Esophagus squamous epithelium (tissue), 5 donors: ENCODE measurements at regions of chr3 and their contacts with region 1.

Region 1: DNA sequence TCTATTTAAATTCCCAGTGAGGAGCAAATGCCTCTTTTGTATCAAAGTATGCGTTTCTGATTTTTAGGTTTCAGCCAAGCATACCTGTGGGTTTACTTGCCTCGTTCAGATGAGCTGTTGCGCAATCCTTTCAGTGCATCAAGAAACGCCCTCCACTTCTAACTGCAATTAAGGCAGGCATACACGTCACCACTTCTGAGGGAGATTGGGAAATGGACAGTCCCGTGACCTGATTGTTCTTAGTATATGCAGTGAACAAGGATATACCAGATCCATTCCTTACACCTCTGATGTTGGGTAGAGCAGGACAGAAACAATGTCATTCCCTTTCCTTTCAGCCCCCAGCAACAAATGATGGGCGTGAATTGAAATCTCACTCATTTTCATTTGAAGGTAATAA is 219.0 kb downstream of the ITPR1 start:
- DNase-seq: no peak
- H3K4me3 ChIP-seq: no peak overlapping the region
- H3K27ac ChIP-seq: peak overlapping the region; percentile 39 to 78 (median 70)
- H3K4me1 ChIP-seq: peaks cover 0 to 17% (median 3%) of the 10 kb centered on the region in 3 donors
- H3K27me3 ChIP-seq: no peaks in the 10 kb centered on the region
- CTCF ChIP-seq: no peak
- POLR2A ChIP-seq: no peak

Region 2: GRCh38 chr3:4323246-4324027 is 388.7 kb before region 1 on chr3:
- intact Hi-C with region 1: no loop called
- DNase-seq: no peak
- H3K4me3 ChIP-seq: no peak overlapping the region
- H3K27ac ChIP-seq: peak overlapping the region in 1 of 4 donors; percentile 26
- H3K4me1 ChIP-seq: peaks cover 4 to 44% (median 16%) of the 10 kb centered on the region in 3 donors
- H3K27me3 ChIP-seq: no peaks in the 10 kb centered on the region
- CTCF ChIP-seq: no peak
- POLR2A ChIP-seq: no peak

Region 3: DNA sequence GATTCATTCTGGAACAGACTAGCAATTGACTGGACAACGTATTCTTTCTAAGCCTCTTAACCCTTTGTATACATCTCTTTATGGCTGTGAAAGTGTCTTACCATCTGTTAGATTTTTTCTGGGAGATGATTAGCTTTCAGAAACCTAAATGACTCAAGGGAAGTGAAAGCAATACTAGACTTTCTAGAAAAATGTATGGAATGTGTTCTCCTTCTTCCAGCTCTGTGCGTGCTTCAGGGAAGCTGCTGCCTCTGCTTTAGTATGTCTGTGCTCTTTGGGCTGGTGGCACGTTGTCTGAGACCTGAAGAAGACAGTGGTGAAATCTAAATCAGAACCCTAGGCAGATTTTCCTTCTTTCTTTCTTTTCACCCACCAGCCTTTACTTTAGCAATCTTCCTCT is 129.5 kb before region 1 on chr3:
- intact Hi-C with region 1: no loop called
- DNase-seq: no peak
- H3K4me3 ChIP-seq: no peak overlapping the region
- H3K27ac ChIP-seq: peak overlapping the region in 3 of 4 donors; percentile 57 to 82 (median 61)
- H3K4me1 ChIP-seq: peaks cover 5 to 50% (median 23%) of the 10 kb centered on the region in 3 donors
- H3K27me3 ChIP-seq: no peaks in the 10 kb centered on the region
- CTCF ChIP-seq: no peak
- POLR2A ChIP-seq: no peak

Region 4: DNA sequence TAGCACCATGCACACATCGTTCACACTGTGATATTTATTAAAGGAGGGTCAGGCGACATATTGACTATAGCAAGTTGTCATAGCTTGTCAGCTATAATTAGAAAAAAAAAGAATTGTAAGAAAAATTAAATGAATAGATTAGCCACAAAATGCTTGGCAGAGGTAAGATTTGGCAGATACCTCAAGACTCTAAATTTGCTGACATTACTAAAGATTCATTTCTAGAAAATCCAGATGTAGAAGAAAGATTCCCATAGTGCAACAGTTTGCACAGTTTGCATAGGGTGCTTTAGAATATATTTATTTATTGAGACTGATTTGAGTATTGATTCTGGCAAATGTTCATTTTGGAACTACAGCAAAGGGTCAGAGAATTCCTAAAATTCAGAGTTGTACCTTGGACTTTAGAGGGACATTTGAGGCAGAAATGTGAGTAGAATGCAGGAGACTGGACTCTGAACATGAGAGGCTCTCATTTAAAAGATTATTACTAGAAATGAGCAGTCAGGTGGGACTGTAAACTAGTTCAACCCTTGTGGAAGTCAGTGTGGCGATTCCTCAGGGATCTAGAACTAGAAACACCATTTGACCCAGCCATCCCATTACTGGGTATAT is 165.1 kb after region 1 on chr3:
- intact Hi-C with region 1: no loop called
- DNase-seq: no peak
- H3K4me3 ChIP-seq: no peak overlapping the region
- H3K27ac ChIP-seq: no peak overlapping the region
- H3K4me1 ChIP-seq: no peaks in the 10 kb centered on the region
- H3K27me3 ChIP-seq: no peaks in the 10 kb centered on the region
- CTCF ChIP-seq: no peak
- POLR2A ChIP-seq: no peak

Region 5: DNA sequence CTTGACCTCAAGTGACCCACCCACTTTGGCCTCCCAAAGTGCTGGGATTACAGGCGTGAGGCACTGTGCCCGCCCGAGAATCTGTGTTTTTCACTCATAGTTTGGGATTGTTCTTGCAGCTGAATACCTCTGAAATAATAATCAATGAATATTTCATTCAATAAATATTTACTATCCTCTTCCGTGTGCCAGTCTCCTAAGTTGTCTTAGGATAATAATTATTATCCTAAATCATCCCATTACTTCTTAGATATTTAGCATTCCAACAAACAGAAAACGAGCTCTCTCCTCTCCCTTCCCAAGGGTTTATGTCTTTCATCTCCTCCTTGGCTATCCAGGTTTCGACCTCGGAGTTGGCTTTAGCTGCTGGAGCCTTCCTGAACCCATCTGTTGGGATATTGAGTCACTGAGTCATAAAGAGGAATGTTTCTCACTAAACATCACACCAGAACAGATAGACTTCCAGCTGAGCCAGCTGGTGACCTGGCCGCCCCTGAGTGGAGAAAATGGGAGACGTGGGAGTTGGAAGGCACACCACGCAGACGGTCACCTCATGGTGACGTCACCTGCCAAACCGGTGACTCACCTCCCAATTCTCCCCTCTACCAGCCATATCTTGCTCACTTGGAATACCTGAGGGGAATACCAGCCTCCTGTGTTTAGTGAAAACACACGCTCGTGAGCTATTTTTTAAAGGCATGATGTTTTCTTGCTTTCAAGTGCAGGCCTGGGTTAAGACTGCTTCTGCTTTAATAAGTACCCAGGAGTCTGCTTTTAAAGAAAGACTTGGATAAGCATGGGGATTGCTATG is 311.0 kb after region 1 on chr3:
- intact Hi-C with region 1: loop called (anchors 5 kb)
- DNase-seq: no peak
- H3K4me3 ChIP-seq: no peak overlapping the region
- H3K27ac ChIP-seq: peak overlapping the region; percentile 84 to 93 (median 90)
- H3K4me1 ChIP-seq: peaks cover 37 to 84% (median 42%) of the 10 kb centered on the region in 3 donors
- H3K27me3 ChIP-seq: no peaks in the 10 kb centered on the region
- CTCF ChIP-seq: no peak
- POLR2A ChIP-seq: no peak

Region 6: GRCh38 chr3:5057857-5058324 is 345.7 kb after region 1 on chr3:
- intact Hi-C with region 1: loop called (anchors 10 kb)
- DNase-seq: no peak
- H3K4me3 ChIP-seq: no peak overlapping the region
- H3K27ac ChIP-seq: peak overlapping the region in 3 of 4 donors; percentile 19 to 66 (median 58)
- H3K4me1 ChIP-seq: peaks cover 0 to 25% (median 4%) of the 10 kb centered on the region in 3 donors
- H3K27me3 ChIP-seq: no peaks in the 10 kb centered on the region
- CTCF ChIP-seq: peak; percentile 62 to 90 (median 84)
- POLR2A ChIP-seq: no peak